Endothelial cell of umbilical vein (primary cell): ENCODE measurements at regions of chr4 and their contacts with region 1.

Region 1: GRCh38 chr4:126778348-126778747 is 854.4 kb upstream of the INTU start:
- DNase-seq: peak; percentile 71
- H3K4me3 ChIP-seq: no peak overlapping the region
- H3K27ac ChIP-seq: peak overlapping the region; percentile 66
- H3K4me1 ChIP-seq: peaks cover 18% of the 10 kb centered on the region
- H3K27me3 ChIP-seq: no peaks in the 10 kb centered on the region
- CTCF ChIP-seq: no peak
- POLR2A ChIP-seq: no peak

Region 2: DNA sequence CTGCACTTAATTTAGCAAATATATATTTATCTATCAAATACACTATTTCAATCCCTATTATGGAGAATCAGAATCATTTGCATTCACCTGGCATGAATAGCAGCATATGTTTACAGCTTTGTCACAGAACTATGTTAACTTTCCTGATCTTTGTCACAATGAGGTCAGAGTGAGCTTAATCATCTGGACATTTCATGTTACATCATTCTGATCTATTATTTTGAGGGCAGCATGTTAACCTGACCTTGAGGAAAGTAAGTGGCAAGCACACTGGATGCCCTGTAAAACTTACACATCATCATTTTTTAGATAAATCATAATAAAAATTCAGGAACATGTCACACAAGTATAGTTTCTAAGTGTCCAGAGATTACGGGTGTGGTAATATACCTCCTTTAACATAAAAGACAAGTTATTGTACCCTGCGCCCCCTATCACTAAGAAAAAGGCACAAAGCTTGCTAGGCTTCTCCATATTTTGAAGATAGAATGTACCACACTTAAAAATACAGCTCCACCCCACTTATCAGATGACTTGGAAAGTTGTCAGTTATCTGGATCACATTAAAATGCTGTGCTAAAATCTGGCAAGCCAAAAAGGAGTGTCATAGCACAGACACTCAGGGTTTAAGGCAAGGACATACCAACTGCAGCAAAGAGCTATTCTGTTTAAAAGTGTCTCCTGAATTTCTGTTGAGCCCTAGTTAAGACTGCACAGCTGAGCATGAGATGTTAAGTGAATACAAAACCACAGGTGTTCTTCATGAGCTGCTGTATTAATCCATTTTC is 1646.3 kb before region 1 on chr4:
- CTCF ChIA-PET with region 1: no interaction called
- POLR2A ChIA-PET with region 1: no interaction called
- dilution Hi-C with region 1: no loop called
- intact Hi-C with region 1: loop called (anchors 10 kb)
- DNase-seq: no peak
- H3K4me3 ChIP-seq: no peak overlapping the region
- H3K27ac ChIP-seq: no peak overlapping the region
- H3K4me1 ChIP-seq: no peaks in the 10 kb centered on the region
- H3K27me3 ChIP-seq: no peaks in the 10 kb centered on the region
- CTCF ChIP-seq: no peak
- POLR2A ChIP-seq: no peak

Region 3: DNA sequence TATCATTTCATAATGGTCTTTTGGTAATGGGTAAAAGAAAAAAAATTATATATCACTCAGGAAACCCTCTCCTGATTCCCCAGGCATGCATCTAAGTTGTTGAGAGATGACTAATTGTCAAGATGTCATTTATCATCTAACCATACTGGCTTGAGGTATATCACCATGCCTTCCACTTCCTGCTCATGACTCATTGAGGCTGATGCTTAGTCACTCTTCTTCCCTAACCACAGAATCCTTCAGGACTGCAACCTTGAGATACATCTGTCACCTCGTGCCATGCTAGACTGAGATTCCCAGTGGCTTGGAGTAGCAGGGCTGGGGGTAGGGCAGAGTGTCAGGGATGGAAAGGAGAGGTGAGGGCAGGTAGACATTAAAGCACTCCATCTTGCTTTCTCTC is 71.9 kb after region 1 on chr4:
- CTCF ChIA-PET with region 1: no interaction called
- POLR2A ChIA-PET with region 1: no interaction called
- dilution Hi-C with region 1: no loop called
- intact Hi-C with region 1: loop called (anchors 1 kb)
- DNase-seq: peak; percentile 71
- H3K4me3 ChIP-seq: no peak overlapping the region
- H3K27ac ChIP-seq: no peak overlapping the region
- H3K4me1 ChIP-seq: peaks cover 11% of the 10 kb centered on the region
- H3K27me3 ChIP-seq: no peaks in the 10 kb centered on the region
- CTCF ChIP-seq: no peak
- POLR2A ChIP-seq: no peak